Natural killer cell (primary cell): ENCODE measurements at regions of chr7 and their contacts with region 1.

Region 1: GRCh38 chr7:141975806-141976523 is 2.4 kb upstream of the TAS2R38 start:
- DNase-seq: peak; percentile 71 to 74
- ATAC-seq: peak; percentile 74 to 83 (median 79)
- H3K4me3 ChIP-seq: peak overlapping the region; percentile 46
- H3K4me3 Mint-ChIP-seq: peak overlapping the region; percentile 82
- H3K27ac ChIP-seq: peak overlapping the region; percentile 65
- H3K27ac Mint-ChIP-seq: peak overlapping the region; percentile 72 to 83
- H3K4me1 ChIP-seq: peaks cover 12% of the 10 kb centered on the region
- H3K4me1 Mint-ChIP-seq: peaks cover 34 to 36% of the 10 kb centered on the region in 2 donors
- H3K27me3 ChIP-seq: no peaks in the 10 kb centered on the region
- H3K27me3 Mint-ChIP-seq: no peaks in the 10 kb centered on the region
- CTCF ChIP-seq: peak; percentile 91

Region 2: GRCh38 chr7:142012825-142013511 is 37.0 kb after region 1 on chr7:
- intact Hi-C with region 1: loop called (anchors 5 kb)
- DNase-seq: peak; percentile 5 to 22
- ATAC-seq: peak; percentile 81 to 86 (median 85)
- H3K4me3 ChIP-seq: no peak overlapping the region
- H3K4me3 Mint-ChIP-seq: peak overlapping the region; percentile 77
- H3K27ac ChIP-seq: peak overlapping the region; percentile 46
- H3K27ac Mint-ChIP-seq: peak overlapping the region; percentile 94 to 98
- H3K4me1 ChIP-seq: peaks cover 15% of the 10 kb centered on the region
- H3K4me1 Mint-ChIP-seq: peaks cover 42 to 81% of the 10 kb centered on the region in 2 donors
- H3K27me3 ChIP-seq: no peaks in the 10 kb centered on the region
- H3K27me3 Mint-ChIP-seq: no peaks in the 10 kb centered on the region
- CTCF ChIP-seq: no peak

Region 3: DNA sequence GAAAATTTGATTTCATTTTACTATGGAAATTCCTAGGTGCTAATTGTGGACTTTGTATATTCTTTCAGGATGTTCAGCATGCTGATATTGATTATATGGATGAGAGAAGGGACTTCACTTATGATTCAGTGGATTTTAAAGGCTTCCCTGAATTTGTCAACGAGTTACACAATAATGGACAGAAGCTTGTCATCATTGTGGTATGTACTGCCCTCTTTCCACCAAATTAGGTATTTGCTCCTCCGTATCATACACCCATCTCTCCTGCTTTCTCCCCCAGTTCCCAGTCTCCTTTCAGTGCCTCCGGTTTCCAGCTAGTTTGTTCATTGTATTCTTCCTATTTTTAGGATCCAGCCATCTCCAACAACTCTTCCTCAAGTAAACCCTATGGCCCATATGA is 54.3 kb after region 1 on chr7:
- intact Hi-C with region 1: loop called (anchors 1 kb)
- DNase-seq: no peak
- ATAC-seq: peak; percentile 38 to 68 (median 46)
- H3K4me3 ChIP-seq: no peak overlapping the region
- H3K4me3 Mint-ChIP-seq: no peak overlapping the region
- H3K27ac ChIP-seq: no peak overlapping the region
- H3K27ac Mint-ChIP-seq: no peak overlapping the region
- H3K4me1 ChIP-seq: peaks cover 5% of the 10 kb centered on the region
- H3K4me1 Mint-ChIP-seq: peaks cover 17 to 20% of the 10 kb centered on the region in 2 donors
- H3K27me3 ChIP-seq: no peaks in the 10 kb centered on the region
- H3K27me3 Mint-ChIP-seq: peaks cover 0 to 8% of the 10 kb centered on the region in 2 donors
- CTCF ChIP-seq: no peak

Region 4: GRCh38 chr7:142188846-142189245 is 212.9 kb after region 1 on chr7:
- intact Hi-C with region 1: loop called (anchors 1 kb)
- DNase-seq: peak in 1 of 2 donors; percentile 6
- ATAC-seq: no peak
- H3K4me3 ChIP-seq: no peak overlapping the region
- H3K4me3 Mint-ChIP-seq: no peak overlapping the region
- H3K27ac ChIP-seq: no peak overlapping the region
- H3K27ac Mint-ChIP-seq: no peak overlapping the region
- H3K4me1 ChIP-seq: no peaks in the 10 kb centered on the region
- H3K4me1 Mint-ChIP-seq: peaks cover 8% of the 10 kb centered on the region in 2 donors
- H3K27me3 ChIP-seq: no peaks in the 10 kb centered on the region
- H3K27me3 Mint-ChIP-seq: peaks cover 11 to 13% of the 10 kb centered on the region in 2 donors
- CTCF ChIP-seq: no peak

Region 5: GRCh38 chr7:142301923-142302550 is 326.1 kb after region 1 on chr7:
- intact Hi-C with region 1: loop called (anchors 2 kb)
- DNase-seq: peak in 1 of 2 donors; percentile 46
- ATAC-seq: peak in 1 of 3 donors; percentile 48
- H3K4me3 ChIP-seq: no peak overlapping the region
- H3K4me3 Mint-ChIP-seq: no peak overlapping the region
- H3K27ac ChIP-seq: no peak overlapping the region
- H3K27ac Mint-ChIP-seq: no peak overlapping the region
- H3K4me1 ChIP-seq: no peaks in the 10 kb centered on the region
- H3K4me1 Mint-ChIP-seq: peaks cover 9 to 15% of the 10 kb centered on the region in 2 donors
- H3K27me3 ChIP-seq: no peaks in the 10 kb centered on the region
- H3K27me3 Mint-ChIP-seq: peaks cover 9 to 23% of the 10 kb centered on the region in 2 donors
- CTCF ChIP-seq: peak; percentile 22

Region 6: GRCh38 chr7:142323706-142324105 is 347.7 kb after region 1 on chr7:
- intact Hi-C with region 1: no loop called
- DNase-seq: peak in 1 of 2 donors; percentile 69
- ATAC-seq: peak in 1 of 3 donors; percentile 39
- H3K4me3 ChIP-seq: no peak overlapping the region
- H3K4me3 Mint-ChIP-seq: no peak overlapping the region
- H3K27ac ChIP-seq: no peak overlapping the region
- H3K27ac Mint-ChIP-seq: no peak overlapping the region
- H3K4me1 ChIP-seq: no peaks in the 10 kb centered on the region
- H3K4me1 Mint-ChIP-seq: no peaks in the 10 kb centered on the region
- H3K27me3 ChIP-seq: no peaks in the 10 kb centered on the region
- H3K27me3 Mint-ChIP-seq: peaks cover 11 to 14% of the 10 kb centered on the region in 2 donors
- CTCF ChIP-seq: no peak

Region 7: DNA sequence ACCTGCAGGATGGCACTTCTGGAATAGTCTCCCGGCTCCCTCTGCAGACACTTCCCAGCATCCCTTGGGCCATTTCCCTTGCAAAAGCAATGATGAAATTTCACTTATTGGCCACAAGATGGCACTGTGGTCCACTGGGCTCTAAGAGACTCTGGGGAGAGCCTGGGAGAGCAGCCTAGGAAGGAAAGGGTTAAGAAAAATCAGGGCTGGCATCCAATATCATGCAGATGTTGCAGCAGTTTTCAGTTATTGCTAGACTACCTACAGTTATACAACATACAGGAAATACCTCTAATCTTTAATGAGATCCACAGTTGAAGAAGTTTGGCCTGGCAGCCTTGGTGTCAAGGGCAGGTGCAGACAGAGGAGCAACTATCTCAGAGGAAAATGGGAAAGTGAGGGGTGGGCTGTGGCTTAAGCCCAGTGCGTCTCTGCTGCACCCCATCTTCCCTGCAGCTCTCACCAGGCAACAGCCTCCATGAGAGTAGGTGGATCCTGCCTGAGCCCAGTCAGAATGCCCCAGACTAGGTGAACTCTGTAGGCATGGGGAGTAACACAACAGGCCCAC is 382.1 kb after region 1 on chr7:
- intact Hi-C with region 1: loop called (anchors 5 kb)
- DNase-seq: peak in 1 of 2 donors; percentile 76
- ATAC-seq: peak; percentile 49 to 79 (median 57)
- H3K4me3 ChIP-seq: no peak overlapping the region
- H3K4me3 Mint-ChIP-seq: no peak overlapping the region
- H3K27ac ChIP-seq: no peak overlapping the region
- H3K27ac Mint-ChIP-seq: no peak overlapping the region
- H3K4me1 ChIP-seq: peaks cover 4% of the 10 kb centered on the region
- H3K4me1 Mint-ChIP-seq: peaks cover 16 to 18% of the 10 kb centered on the region in 2 donors
- H3K27me3 ChIP-seq: no peaks in the 10 kb centered on the region
- H3K27me3 Mint-ChIP-seq: peaks cover 0 to 5% of the 10 kb centered on the region in 2 donors
- CTCF ChIP-seq: peak; percentile 72

Region 8: DNA sequence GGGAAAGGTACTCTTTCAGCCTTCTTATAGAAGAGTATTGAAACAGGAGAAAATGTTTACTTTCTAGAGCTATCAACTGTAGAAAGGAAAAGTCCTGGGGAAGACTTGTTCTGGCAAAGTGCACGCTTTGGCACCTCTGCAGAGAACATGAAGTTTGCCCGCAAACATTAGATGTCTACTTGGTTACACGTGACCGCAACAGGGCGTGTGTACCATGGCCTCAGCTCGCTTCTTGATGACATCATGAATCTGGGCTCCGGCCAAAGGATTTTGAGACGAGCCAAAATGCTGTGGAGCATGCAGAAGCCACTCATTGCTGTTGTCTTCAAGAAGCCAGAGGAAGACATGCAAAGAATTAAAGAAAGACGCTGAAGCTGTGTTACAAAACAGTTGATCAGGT is 1458.7 kb after region 1 on chr7:
- intact Hi-C with region 1: no loop called
- DNase-seq: no peak
- ATAC-seq: no peak
- H3K4me3 ChIP-seq: no peak overlapping the region
- H3K4me3 Mint-ChIP-seq: no peak overlapping the region
- H3K27ac ChIP-seq: no peak overlapping the region
- H3K27ac Mint-ChIP-seq: no peak overlapping the region
- H3K4me1 ChIP-seq: no peaks in the 10 kb centered on the region
- H3K4me1 Mint-ChIP-seq: peaks cover 0 to 8% of the 10 kb centered on the region in 2 donors
- H3K27me3 ChIP-seq: no peaks in the 10 kb centered on the region
- H3K27me3 Mint-ChIP-seq: peaks cover 7 to 16% of the 10 kb centered on the region in 2 donors
- CTCF ChIP-seq: no peak